ENCODE measurements at regions of chr1 and their contacts with region 1.

Region 1: DNA sequence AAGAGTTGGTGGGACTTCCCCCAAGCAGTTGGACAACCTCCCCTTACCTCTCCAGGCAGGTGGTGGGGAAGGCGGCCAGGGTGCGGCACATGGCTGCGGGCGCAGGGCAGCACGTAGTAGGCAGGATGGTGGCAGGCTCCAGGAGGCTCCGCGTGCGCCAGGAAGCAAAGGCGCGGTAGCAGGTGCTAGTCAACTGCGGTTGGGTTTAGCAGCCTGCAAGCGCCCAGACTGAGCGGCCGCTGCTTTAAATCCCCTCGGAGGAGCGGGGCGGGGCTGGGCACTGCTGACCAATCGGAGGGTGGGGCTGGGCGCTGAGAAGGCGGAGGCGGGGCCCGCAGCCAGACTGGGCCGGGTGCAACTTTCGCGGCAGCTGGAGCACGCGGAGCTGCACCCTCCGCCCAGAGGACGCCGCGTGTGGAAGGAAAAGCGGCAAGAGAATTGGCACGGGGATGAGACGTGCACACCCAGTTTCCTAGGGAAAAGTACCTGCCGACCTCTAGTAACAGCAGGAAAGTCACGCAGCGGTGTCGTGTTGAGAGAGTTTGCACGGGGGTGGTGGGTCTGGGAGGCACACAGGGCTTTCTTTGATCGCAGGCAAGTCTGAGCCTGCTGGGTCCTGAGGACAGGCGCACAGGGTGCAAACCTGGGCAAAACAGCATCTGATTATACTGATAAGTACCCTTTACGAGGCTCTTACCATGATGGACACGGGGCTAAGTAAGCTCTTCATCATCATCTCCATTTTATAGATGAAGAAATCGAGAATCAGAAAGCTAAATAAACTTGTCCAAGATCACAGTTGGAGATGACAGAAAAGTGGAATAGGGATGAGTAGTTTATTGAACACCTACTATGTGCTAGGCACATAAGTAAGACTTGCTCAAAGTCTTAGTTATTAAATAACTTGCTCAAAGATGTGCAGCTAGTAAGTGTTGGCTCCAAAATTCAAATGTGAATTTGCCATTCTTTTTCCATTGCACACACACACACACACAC is at the start of gene RGS16:
- DNase-seq: peak; percentile 97
- ATAC-seq: peak; percentile 88
- H3K4me3 Mint-ChIP-seq: no peak within 1 kb of the TSS
- H3K27ac Mint-ChIP-seq: peak within 1 kb of the TSS; percentile 70
- H3K4me1 Mint-ChIP-seq: peaks cover 43% of the 10 kb centered on the region
- H3K27me3 Mint-ChIP-seq: peaks cover 6% of the 10 kb centered on the region
- total RNA-seq, gene RGS16: 27.2 to 30.6 TPM

Region 2: DNA sequence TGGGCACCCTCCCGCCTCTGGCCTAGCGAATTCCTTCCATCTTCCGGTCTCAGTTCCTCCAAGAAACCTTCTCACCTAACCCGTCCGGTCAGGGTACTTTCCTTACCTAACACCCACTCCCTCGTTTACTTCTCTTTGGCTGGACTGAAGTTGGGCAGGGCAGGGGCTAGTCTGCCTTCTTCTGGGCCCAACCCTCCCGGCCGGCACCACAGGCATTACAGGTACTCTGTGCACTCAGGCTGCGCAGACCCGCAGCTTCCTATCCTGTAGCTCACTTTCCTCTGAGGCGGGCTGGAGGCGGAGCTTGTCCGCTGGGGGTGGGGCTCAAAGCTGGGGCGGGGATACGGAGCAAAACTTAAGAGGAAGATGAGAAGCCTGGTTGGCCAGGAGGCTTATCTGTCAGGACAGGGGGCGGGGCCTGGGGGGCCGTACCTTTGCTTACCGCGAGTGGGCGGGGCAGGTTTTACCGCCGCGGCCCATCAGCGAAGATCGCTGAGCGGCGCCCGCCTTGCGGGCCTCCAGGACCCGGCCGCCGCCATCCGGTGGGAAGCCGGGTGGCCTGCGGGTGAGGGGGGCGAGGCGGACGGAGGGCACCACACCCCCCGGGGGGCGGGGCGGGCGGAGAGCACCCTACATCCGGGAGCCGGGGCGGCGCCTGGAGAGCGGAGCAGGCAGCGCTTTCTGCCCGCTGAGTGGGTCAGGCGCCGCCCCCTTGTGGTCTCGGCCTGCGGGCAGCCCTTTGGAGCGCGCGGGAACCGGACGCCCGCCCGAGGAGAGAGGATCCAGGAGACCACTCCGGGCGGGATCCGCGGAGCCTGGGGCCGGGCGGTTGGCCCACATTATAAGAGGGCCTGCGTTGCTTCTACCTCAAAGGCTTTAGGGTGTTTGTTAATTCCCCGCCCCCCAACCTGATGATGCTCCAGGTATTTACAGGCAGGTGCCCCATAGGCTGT is 574.8 kb before region 1 on chr1:
- CTCF ChIA-PET with region 1: no interaction called
- POLR2A ChIA-PET with region 1: no interaction called
- intact Hi-C with region 1: loop called in 1 of 2 experiments (anchors 1 kb)
- DNase-seq: peak; percentile 99
- ATAC-seq: peak; percentile 96
- H3K4me3 Mint-ChIP-seq: peak overlapping the region; percentile 86
- H3K27ac Mint-ChIP-seq: peak overlapping the region; percentile 97
- H3K4me1 Mint-ChIP-seq: peaks cover 11% of the 10 kb centered on the region
- H3K27me3 Mint-ChIP-seq: no peaks in the 10 kb centered on the region

Region 3: DNA sequence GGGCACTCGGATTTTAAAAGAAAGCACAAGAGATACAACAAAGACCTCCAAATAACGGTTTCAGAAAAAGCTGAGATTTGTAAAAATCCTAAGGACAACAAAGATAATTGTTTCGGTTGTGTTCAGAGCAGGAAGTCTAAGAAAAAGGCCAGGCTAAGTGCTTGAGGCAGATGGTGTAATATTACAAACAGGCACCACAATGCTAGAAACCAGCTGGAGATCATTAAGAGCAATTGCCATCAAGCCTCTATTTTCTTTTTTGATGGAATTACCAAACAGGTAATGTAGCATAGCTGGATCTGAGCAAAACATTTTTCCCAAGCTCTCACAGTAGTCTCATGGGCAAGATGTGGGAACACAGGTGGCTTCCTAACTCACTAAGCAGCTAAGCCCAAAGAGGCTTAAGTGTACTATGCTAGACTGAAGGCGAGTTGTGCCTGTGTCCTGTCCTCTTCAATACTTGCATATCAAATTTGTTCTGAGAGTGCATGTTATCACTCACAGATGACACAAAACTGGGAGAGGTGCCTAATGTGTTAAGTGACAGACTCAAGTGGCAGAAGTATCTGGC is 374.5 kb before region 1 on chr1:
- CTCF ChIA-PET with region 1: no interaction called
- POLR2A ChIA-PET with region 1: no interaction called
- intact Hi-C with region 1: no loop called
- DNase-seq: no peak
- ATAC-seq: no peak
- H3K4me3 Mint-ChIP-seq: no peak overlapping the region
- H3K27ac Mint-ChIP-seq: no peak overlapping the region
- H3K4me1 Mint-ChIP-seq: no peaks in the 10 kb centered on the region
- H3K27me3 Mint-ChIP-seq: no peaks in the 10 kb centered on the region

Region 4: GRCh38 chr1:182588500-182589452 is 15.7 kb before region 1 on chr1 and contains the start of gene RNASEL:
- CTCF ChIA-PET with region 1: interaction called, 57 read pairs
- POLR2A ChIA-PET with region 1: interaction called, 3 read pairs
- intact Hi-C with region 1: no loop called
- DNase-seq: peak; percentile 74
- ATAC-seq: peak; percentile 92
- H3K4me3 Mint-ChIP-seq: peak within 1 kb of the TSS; percentile 89
- H3K27ac Mint-ChIP-seq: peak within 1 kb of the TSS; percentile 99
- H3K4me1 Mint-ChIP-seq: peaks cover 45% of the 10 kb centered on the region
- H3K27me3 Mint-ChIP-seq: no peaks in the 10 kb centered on the region
- total RNA-seq, gene RNASEL: 3.7 to 4.0 TPM

Region 5: DNA sequence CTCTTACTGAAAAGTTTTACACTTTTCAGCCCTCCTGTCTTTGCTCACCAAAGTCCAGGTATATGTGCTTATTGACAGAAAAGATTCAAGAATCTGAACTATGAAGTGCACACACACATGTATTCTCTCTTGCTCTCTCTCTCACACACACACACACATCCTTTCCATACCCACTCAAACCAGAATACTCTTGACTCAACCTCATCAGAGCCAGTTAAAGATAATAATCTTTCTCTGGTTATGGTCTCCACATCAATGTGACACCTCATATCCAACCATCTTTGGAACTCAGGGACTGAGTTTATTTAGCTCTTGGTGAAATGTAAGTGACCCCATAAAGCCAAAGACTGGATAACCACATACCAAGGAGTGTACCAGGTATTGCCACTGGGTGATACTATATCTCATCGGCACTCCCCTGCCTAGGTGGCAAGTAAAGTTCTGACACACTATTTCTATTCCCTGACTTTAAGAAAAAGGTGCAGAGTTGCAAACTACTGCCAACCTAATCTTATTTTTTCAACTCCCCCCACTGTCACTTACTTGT is 104.8 kb after region 1 on chr1:
- CTCF ChIA-PET with region 1: interaction called, 3 read pairs
- POLR2A ChIA-PET with region 1: no interaction called
- intact Hi-C with region 1: loop called (anchors 1 to 5 kb)
- DNase-seq: no peak
- ATAC-seq: peak; percentile 77
- H3K4me3 Mint-ChIP-seq: no peak overlapping the region
- H3K27ac Mint-ChIP-seq: peak overlapping the region; percentile 7
- H3K4me1 Mint-ChIP-seq: peaks cover 34% of the 10 kb centered on the region
- H3K27me3 Mint-ChIP-seq: no peaks in the 10 kb centered on the region

Region 6: GRCh38 chr1:182781841-182782586 is 177.5 kb after region 1 on chr1:
- CTCF ChIA-PET with region 1: interaction called, 772 read pairs
- POLR2A ChIA-PET with region 1: no interaction called
- intact Hi-C with region 1: loop called (anchors 1 kb)
- DNase-seq: peak; percentile 86
- ATAC-seq: peak; percentile 77
- H3K4me3 Mint-ChIP-seq: no peak overlapping the region
- H3K27ac Mint-ChIP-seq: no peak overlapping the region
- H3K4me1 Mint-ChIP-seq: peaks cover 3% of the 10 kb centered on the region
- H3K27me3 Mint-ChIP-seq: no peaks in the 10 kb centered on the region

Region 7: GRCh38 chr1:182839209-182840065 is 235.0 kb after region 1 on chr1 and contains the start of gene DHX9:
- CTCF ChIA-PET with region 1: interaction called, 4 read pairs
- POLR2A ChIA-PET with region 1: no interaction called
- intact Hi-C with region 1: loop called (anchors 1 to 5 kb)
- DNase-seq: peak; percentile 97
- ATAC-seq: peak; percentile 89
- H3K4me3 Mint-ChIP-seq: peak within 1 kb of the TSS; percentile 92
- H3K27ac Mint-ChIP-seq: peak within 1 kb of the TSS; percentile 99
- H3K4me1 Mint-ChIP-seq: peaks cover 36% of the 10 kb centered on the region
- H3K27me3 Mint-ChIP-seq: no peaks in the 10 kb centered on the region
- total RNA-seq, gene DHX9: 244 to 255 TPM

Region 8: GRCh38 chr1:182955596-182956588 is 351.4 kb after region 1 on chr1:
- CTCF ChIA-PET with region 1: no interaction called
- POLR2A ChIA-PET with region 1: no interaction called
- intact Hi-C with region 1: no loop called
- DNase-seq: no peak
- ATAC-seq: no peak
- H3K4me3 Mint-ChIP-seq: no peak overlapping the region
- H3K27ac Mint-ChIP-seq: no peak overlapping the region
- H3K4me1 Mint-ChIP-seq: no peaks in the 10 kb centered on the region
- H3K27me3 Mint-ChIP-seq: peaks cover 30% of the 10 kb centered on the region